ENCODE measurements at regions of chr5 and their contacts with region 1.

Region 1: DNA sequence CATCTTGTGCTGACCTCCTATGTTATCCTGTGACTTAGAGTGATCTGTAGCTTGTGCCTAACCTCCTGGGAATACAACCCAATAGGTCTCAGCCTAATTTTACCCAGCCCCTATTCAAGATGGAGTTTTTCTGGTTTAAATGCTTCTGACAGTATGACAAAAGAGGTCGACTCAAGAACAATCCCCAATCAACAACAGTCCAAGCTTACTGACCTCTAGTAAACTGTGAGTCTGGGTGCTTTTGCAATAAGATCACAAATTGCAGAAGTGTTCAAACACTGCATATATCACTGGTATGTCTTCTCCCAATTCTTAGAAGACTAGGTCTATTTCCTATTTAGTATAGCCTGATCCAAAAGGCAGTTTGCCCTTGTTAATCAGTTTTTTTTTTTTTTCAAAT is 323.5 kb upstream of the PTGER4 start:
- DNase-seq: no peak
- ATAC-seq: no peak
- H3K4me3 Mint-ChIP-seq: no peak overlapping the region
- H3K27ac Mint-ChIP-seq: no peak overlapping the region
- H3K4me1 Mint-ChIP-seq: no peaks in the 10 kb centered on the region
- H3K27me3 Mint-ChIP-seq: no peaks in the 10 kb centered on the region
- CTCF ChIP-seq: no peak

Region 2: GRCh38 chr5:40010436-40010835 is 345.8 kb before region 1 on chr5:
- CTCF ChIA-PET with region 1: no interaction called
- POLR2A ChIA-PET with region 1: no interaction called
- intact Hi-C with region 1: loop called (anchors 5 kb)
- DNase-seq: no peak
- ATAC-seq: no peak
- H3K4me3 Mint-ChIP-seq: no peak overlapping the region
- H3K27ac Mint-ChIP-seq: no peak overlapping the region
- H3K4me1 Mint-ChIP-seq: no peaks in the 10 kb centered on the region
- H3K27me3 Mint-ChIP-seq: peaks cover 15% of the 10 kb centered on the region
- CTCF ChIP-seq: no peak

Region 3: DNA sequence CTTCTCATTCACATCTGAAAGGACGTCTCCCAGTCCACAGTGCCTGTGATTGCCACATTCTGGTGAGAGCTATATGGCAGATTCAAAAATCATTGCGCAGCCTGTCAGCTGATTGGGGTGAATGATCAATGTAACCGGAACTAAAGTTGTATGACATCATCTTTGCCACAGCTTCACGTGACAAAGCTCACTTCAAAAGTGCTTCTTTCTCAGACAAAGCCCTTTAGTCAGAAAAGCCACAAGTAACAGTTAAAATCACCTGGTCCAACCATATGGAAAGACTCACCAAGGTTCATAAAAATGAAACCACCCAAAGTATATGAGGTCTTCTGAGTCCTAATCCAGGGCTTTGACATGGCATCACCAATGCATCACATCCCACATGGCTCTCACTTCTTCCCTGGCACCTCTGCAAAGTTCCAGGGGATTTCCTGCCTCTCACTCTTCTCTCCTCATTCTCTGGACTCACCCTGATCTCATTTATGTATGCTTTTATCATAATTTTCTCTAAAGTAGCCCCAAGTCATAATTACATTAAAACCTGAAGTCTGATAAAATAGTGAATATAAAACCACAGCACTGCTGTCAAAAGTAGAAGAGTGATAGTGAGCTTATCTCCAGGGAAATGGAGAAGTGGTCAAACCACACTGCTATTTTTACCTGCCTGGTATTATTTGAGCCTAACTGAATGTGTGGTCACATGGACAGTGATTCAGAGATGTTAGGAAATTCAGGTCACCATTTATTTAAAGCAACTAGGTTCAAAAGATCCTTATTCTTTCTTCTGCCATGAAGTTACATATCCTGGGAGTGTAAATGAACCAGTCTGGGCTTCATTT is 130.4 kb after region 1 on chr5:
- CTCF ChIA-PET with region 1: no interaction called
- POLR2A ChIA-PET with region 1: no interaction called
- intact Hi-C with region 1: no loop called
- DNase-seq: no peak
- ATAC-seq: peak; percentile 38
- H3K4me3 Mint-ChIP-seq: peak overlapping the region; percentile 64
- H3K27ac Mint-ChIP-seq: peak overlapping the region; percentile 87
- H3K4me1 Mint-ChIP-seq: peaks cover 82% of the 10 kb centered on the region
- H3K27me3 Mint-ChIP-seq: no peaks in the 10 kb centered on the region
- CTCF ChIP-seq: no peak